Activated CD8-positive, alpha-beta T cell treated with anti-CD3 and anti-CD28 coated beads, Interleukin-2, amount 10 ng/mL, durations not matched to agents 7 days and 5 days (primary cell): ENCODE measurements at regions of chr15 and their contacts with region 1.

Region 1: GRCh38 chr15:38699633-38700230 is 135.1 kb upstream of the RASGRP1 start:
- DNase-seq: peak; percentile 87
- ATAC-seq: peak; percentile 34
- H3K4me3 Mint-ChIP-seq: peak overlapping the region; percentile 31
- H3K27ac Mint-ChIP-seq: peak overlapping the region; percentile 84
- H3K4me1 Mint-ChIP-seq: peaks cover 62% of the 10 kb centered on the region
- H3K27me3 Mint-ChIP-seq: no peaks in the 10 kb centered on the region

Region 2: DNA sequence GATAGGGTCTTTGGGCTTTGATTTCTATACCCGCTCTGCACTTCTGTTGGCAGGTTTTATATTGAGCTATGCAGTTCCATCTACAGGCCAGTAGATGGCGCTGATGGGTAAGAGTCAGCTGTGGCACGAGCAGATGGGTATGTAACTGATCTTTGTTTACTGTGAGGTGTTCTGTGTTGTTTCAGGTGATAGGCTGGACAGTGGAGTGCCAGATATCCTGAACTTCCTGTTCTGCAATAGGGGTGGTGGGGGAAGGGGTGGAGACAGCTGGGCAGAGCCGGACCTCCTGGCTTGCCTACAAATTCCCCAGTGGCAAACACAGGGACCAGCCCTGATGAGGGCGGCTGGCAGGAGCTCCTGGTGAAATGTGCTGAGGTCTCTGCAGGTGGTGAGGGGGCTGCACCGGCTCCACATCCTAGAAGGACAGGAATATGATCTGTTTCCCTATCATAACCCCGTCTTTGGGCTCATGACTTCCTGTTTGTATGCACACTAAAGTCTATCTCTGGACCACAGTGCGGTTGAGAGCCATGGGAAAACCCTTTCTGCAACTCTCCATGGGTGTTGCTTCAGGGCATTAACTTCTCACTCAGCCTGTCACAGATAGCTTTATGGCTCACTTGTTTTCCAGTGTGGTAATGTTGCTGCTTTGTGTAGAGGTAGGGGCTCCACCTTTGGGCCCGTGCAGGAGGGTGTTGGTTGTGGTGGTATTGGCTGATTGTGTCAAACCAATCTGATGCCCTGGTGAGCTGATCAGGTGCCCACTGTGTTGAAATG is 259.2 kb before region 1 on chr15:
- CTCF ChIA-PET with region 1: interaction called, 261 read pairs
- POLR2A ChIA-PET with region 1: interaction called, 3 read pairs
- DNase-seq: peak; percentile 73
- ATAC-seq: peak; percentile 82
- H3K4me3 Mint-ChIP-seq: no peak overlapping the region
- H3K27ac Mint-ChIP-seq: no peak overlapping the region
- H3K4me1 Mint-ChIP-seq: peaks cover 11% of the 10 kb centered on the region
- H3K27me3 Mint-ChIP-seq: peaks cover 34% of the 10 kb centered on the region

Region 3: DNA sequence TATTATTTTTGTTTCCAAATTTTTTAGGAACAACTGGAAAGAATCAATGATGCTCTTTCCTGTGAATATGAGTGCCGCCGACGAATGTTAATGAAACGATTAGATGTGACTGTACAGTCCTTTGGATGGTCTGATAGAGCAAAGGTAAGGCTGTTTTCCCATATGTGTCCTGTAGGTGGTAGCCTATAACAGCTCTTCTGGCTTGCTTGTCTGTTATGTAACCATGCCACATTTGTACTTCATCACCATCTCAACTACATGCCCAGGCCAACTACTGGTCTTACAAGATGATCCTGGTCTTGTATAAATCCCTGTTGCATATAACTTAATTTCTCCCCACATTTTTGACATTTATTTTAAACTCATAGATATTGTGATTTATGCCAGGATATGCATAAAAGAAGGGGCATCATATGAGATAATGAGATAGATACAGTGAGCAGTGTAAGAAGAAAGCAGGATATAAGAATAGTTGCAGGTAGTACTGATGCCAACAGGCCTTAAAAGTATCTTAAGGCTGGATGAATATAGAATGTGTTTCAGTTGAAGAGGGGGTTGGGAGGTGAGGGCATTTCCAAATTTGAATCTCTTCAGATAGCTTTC is 225.5 kb before region 1 on chr15:
- CTCF ChIA-PET with region 1: interaction called, 130 read pairs
- POLR2A ChIA-PET with region 1: interaction called, 5 read pairs
- DNase-seq: peak; percentile 58
- ATAC-seq: peak; percentile 95
- H3K4me3 Mint-ChIP-seq: no peak overlapping the region
- H3K27ac Mint-ChIP-seq: peak overlapping the region; percentile 7
- H3K4me1 Mint-ChIP-seq: peaks cover 2% of the 10 kb centered on the region
- H3K27me3 Mint-ChIP-seq: no peaks in the 10 kb centered on the region

Region 4: DNA sequence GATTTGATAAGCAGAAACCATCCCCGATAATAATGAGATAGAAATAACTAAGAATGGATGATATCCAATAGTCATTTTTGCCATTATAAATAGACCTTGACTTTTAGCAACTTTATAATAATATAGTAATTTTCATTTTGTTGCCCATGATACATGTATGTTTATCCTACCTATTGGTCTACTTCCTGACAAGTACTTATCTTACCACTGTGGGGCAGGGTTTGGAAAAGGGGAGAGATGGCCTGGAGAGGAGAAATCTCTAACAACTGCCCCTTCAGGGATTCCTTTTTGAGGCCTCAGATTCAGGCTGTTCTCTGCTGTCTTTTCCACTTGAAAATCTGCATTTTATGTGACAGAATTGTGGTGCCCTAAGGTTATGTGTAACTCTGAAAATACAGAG is 203.6 kb before region 1 on chr15:
- CTCF ChIA-PET with region 1: interaction called, 39 read pairs
- POLR2A ChIA-PET with region 1: no interaction called
- DNase-seq: no peak
- ATAC-seq: no peak
- H3K4me3 Mint-ChIP-seq: no peak overlapping the region
- H3K27ac Mint-ChIP-seq: peak overlapping the region; percentile 18
- H3K4me1 Mint-ChIP-seq: peaks cover 5% of the 10 kb centered on the region
- H3K27me3 Mint-ChIP-seq: no peaks in the 10 kb centered on the region

Region 5: GRCh38 chr15:38536201-38536676 is 163.5 kb before region 1 on chr15:
- CTCF ChIA-PET with region 1: interaction called, 15 read pairs
- POLR2A ChIA-PET with region 1: no interaction called
- DNase-seq: peak; percentile 2
- ATAC-seq: no peak
- H3K4me3 Mint-ChIP-seq: no peak overlapping the region
- H3K27ac Mint-ChIP-seq: peak overlapping the region; percentile 73
- H3K4me1 Mint-ChIP-seq: peaks cover 97% of the 10 kb centered on the region
- H3K27me3 Mint-ChIP-seq: no peaks in the 10 kb centered on the region

Region 6: GRCh38 chr15:38563723-38564519 is 135.8 kb before region 1 on chr15:
- CTCF ChIA-PET with region 1: interaction called, 102 read pairs
- POLR2A ChIA-PET with region 1: interaction called, 30 read pairs
- DNase-seq: peak; percentile 89
- ATAC-seq: peak; percentile 81
- H3K4me3 Mint-ChIP-seq: peak overlapping the region; percentile 94
- H3K27ac Mint-ChIP-seq: peak overlapping the region; percentile 93
- H3K4me1 Mint-ChIP-seq: peaks cover 58% of the 10 kb centered on the region
- H3K27me3 Mint-ChIP-seq: no peaks in the 10 kb centered on the region

Region 7: GRCh38 chr15:38671675-38672254 is 28.0 kb before region 1 on chr15:
- CTCF ChIA-PET with region 1: interaction called, 14 read pairs
- POLR2A ChIA-PET with region 1: interaction called, 4 read pairs
- DNase-seq: peak; percentile 44
- ATAC-seq: peak; percentile 34
- H3K4me3 Mint-ChIP-seq: peak overlapping the region; percentile 44
- H3K27ac Mint-ChIP-seq: peak overlapping the region; percentile 91
- H3K4me1 Mint-ChIP-seq: peaks cover 84% of the 10 kb centered on the region
- H3K27me3 Mint-ChIP-seq: no peaks in the 10 kb centered on the region

Region 8: DNA sequence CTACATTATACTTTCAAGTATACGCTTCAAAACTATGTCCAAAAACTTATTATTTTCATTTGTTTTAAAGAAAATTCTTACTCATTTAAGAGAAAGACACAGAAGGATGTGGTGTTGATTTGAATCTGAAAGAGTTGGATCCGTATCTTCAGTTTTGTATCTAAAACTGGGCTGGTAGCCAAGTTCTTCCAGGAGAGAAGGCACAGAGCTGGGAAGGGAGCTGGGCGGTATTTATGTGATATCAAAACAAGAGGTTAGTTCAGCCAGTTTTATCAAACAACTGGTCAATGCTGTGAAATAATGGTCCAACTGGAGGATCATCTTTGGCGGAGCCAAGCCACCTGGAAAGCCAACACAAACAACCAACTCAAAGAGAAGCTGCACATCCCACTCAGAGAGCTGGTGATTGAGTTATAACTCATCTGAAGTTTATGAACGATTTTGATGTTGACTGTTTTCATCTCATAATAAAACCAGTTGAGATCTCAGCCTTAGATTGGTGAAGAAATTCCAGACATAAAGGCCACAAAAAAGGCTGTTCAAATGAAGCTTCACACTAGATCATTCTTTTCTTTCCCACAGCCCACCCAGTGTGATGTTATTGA is 354.5 kb after region 1 on chr15:
- CTCF ChIA-PET with region 1: no interaction called
- POLR2A ChIA-PET with region 1: no interaction called
- DNase-seq: no peak
- ATAC-seq: no peak
- H3K4me3 Mint-ChIP-seq: no peak overlapping the region
- H3K27ac Mint-ChIP-seq: no peak overlapping the region
- H3K4me1 Mint-ChIP-seq: no peaks in the 10 kb centered on the region
- H3K27me3 Mint-ChIP-seq: peaks cover 22% of the 10 kb centered on the region